ENCODE measurements at regions of chr19 and their contacts with region 1.

Region 1: GRCh38 chr19:16435238-16435917 is 36.4 kb downstream of the EPS15L1 start:
- DNase-seq: peak; percentile 26 to 71
- ATAC-seq: peak; percentile 84 to 93 (median 91)
- H3K4me3 ChIP-seq: no peak overlapping the region
- H3K4me3 Mint-ChIP-seq: peak overlapping the region; percentile 82
- H3K27ac ChIP-seq: peak overlapping the region; percentile 72
- H3K27ac Mint-ChIP-seq: peak overlapping the region; percentile 97 to 99
- H3K4me1 ChIP-seq: peaks cover 57% of the 10 kb centered on the region
- H3K4me1 Mint-ChIP-seq: peaks cover 39 to 42% of the 10 kb centered on the region in 2 donors
- H3K27me3 ChIP-seq: no peaks in the 10 kb centered on the region
- H3K27me3 Mint-ChIP-seq: no peaks in the 10 kb centered on the region
- CTCF ChIP-seq: no peak

Region 2: DNA sequence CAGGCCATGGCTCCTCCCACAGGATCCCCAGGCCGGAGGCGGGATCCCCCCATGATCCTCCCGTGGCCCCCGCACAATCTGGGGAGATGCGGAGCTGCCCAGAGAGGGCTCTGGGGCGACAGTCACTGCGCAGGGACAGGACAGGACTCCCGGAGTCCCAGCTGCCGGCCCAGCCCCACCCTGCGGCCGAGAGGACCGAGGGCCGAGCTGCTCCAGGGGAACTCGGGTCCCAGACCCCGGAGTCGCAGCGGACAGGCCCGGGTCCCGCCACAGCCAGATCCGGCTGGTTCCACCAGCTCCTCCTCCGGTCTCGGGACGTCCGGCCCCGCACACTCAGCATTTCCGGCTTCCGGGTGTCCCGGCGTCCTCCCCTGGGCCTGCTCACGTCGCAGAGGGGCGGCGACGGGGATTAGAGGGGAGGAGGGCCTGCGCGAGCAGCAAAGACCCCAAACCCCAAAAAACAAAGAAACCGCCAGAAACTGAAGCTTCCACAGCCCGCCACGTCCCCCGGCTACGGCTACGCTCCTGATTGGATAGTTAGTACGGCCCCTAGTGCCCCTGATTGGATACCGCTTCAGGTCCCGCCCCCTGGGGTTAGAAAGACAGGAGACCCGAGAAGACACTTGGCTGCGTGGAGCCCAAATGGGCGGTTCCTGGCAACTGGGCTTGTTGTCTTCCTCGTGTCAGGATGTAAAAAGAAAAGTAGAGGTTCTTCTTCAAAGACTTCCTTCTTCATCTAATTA is 598.6 kb before region 1 on chr19:
- intact Hi-C with region 1: loop called (anchors 10 kb)
- DNase-seq: peak; percentile 94 to 96
- ATAC-seq: peak; percentile 87 to 96 (median 90)
- H3K4me3 ChIP-seq: peak overlapping the region; percentile 92
- H3K4me3 Mint-ChIP-seq: peak overlapping the region; percentile 97
- H3K27ac ChIP-seq: peak overlapping the region; percentile 99
- H3K27ac Mint-ChIP-seq: peak overlapping the region; percentile 96 to 97
- H3K4me1 ChIP-seq: peaks cover 15% of the 10 kb centered on the region
- H3K4me1 Mint-ChIP-seq: peaks cover 18 to 19% of the 10 kb centered on the region in 2 donors
- H3K27me3 ChIP-seq: no peaks in the 10 kb centered on the region
- H3K27me3 Mint-ChIP-seq: no peaks in the 10 kb centered on the region
- CTCF ChIP-seq: no peak

Region 3: DNA sequence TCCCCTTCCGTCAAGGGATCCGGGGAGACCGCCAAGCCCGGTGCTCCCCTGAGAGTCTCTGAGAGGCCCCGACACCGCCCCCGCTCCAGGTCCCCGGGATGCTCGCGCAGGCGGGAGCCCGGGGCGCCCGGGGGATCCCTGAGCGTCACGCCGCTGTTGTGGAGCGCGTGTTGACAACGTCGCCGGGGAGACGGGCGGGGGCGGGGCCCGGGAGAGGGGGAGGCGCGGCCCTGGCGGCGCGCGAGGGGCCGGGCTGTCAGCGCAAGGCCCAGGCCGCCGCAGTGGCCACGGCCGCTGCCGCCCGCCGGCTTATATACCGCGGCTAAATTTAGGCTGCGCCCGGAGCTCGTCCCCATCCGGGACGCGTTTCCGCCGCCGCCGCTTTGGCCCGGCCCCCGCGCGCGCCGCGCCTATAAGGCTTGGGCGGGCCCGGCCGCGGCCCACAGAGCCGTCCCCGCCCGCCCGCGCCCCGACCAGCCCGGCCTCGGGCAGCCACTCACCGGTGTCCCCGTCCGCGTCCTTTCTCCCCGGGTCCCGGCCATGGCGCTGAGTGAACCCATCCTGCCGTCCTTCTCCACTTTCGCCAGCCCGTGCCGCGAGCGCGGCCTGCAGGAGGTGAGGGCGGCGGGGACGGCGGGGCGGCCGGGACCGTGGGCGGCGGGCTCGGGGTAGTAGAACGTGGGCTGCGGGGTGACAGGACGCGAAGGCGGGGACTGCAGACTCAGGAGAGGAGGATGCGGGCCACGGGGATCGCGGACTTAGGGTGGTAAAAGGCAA is 110.8 kb before region 1 on chr19 and contains the start of gene KLF2:
- intact Hi-C with region 1: loop called (anchors 5 kb)
- DNase-seq: peak; percentile 97 to 98
- ATAC-seq: peak; percentile 61 to 84 (median 77)
- H3K4me3 ChIP-seq: peak within 1 kb of the TSS; percentile 99
- H3K4me3 Mint-ChIP-seq: peak within 1 kb of the TSS; percentile 81
- H3K27ac ChIP-seq: peak within 1 kb of the TSS; percentile 98
- H3K27ac Mint-ChIP-seq: peak within 1 kb of the TSS; percentile 98 to 99
- H3K4me1 ChIP-seq: peaks cover 35% of the 10 kb centered on the region
- H3K4me1 Mint-ChIP-seq: peaks cover 22 to 35% of the 10 kb centered on the region in 2 donors
- H3K27me3 ChIP-seq: no peaks in the 10 kb centered on the region
- H3K27me3 Mint-ChIP-seq: peaks cover 0 to 4% of the 10 kb centered on the region in 2 donors
- CTCF ChIP-seq: no peak
- total RNA-seq, gene KLF2: 246 to 645 (median 377) TPM

Region 4: GRCh38 chr19:16446724-16447368 is 11.5 kb after region 1 on chr19:
- intact Hi-C with region 1: loop called (anchors 1 kb)
- DNase-seq: peak; percentile 72 to 81
- ATAC-seq: peak; percentile 78 to 85 (median 80)
- H3K4me3 ChIP-seq: no peak overlapping the region
- H3K4me3 Mint-ChIP-seq: peak overlapping the region; percentile 91
- H3K27ac ChIP-seq: peak overlapping the region; percentile 88
- H3K27ac Mint-ChIP-seq: peak overlapping the region; percentile 96 to 97
- H3K4me1 ChIP-seq: peaks cover 91% of the 10 kb centered on the region
- H3K4me1 Mint-ChIP-seq: peaks cover 76 to 81% of the 10 kb centered on the region in 2 donors
- H3K27me3 ChIP-seq: no peaks in the 10 kb centered on the region
- H3K27me3 Mint-ChIP-seq: no peaks in the 10 kb centered on the region
- CTCF ChIP-seq: no peak

Region 5: GRCh38 chr19:16554776-16555175 is 119.4 kb after region 1 on chr19:
- intact Hi-C with region 1: no loop called
- DNase-seq: no peak
- ATAC-seq: no peak
- H3K4me3 ChIP-seq: no peak overlapping the region
- H3K4me3 Mint-ChIP-seq: no peak overlapping the region
- H3K27ac ChIP-seq: no peak overlapping the region
- H3K27ac Mint-ChIP-seq: no peak overlapping the region
- H3K4me1 ChIP-seq: no peaks in the 10 kb centered on the region
- H3K4me1 Mint-ChIP-seq: peaks cover 0 to 4% of the 10 kb centered on the region in 2 donors
- H3K27me3 ChIP-seq: no peaks in the 10 kb centered on the region
- H3K27me3 Mint-ChIP-seq: no peaks in the 10 kb centered on the region
- CTCF ChIP-seq: no peak

Region 6: DNA sequence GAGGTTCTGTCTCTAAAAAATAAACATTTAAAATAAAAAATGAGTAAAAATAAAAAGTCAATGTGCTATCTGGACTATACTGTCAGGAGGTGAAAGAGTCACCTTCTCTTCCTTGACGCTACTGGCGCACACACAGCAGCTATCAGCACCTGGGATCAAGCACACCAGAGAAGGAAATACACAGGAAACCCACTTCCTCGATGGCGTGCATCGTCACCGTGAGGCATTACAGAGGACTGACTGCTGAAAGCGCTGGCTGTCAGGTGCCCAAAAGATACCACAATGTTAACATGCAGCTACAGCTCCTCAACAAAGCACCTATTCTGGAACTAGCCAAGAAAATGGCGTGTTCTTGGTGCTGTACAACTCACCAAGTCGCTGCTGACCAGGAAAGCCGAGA is 130.8 kb after region 1 on chr19:
- intact Hi-C with region 1: loop called (anchors 5 kb)
- DNase-seq: peak; percentile 57 to 96
- ATAC-seq: peak; percentile 96 to 98 (median 97)
- H3K4me3 ChIP-seq: no peak overlapping the region
- H3K4me3 Mint-ChIP-seq: peak overlapping the region; percentile 95
- H3K27ac ChIP-seq: peak overlapping the region; percentile 52
- H3K27ac Mint-ChIP-seq: peak overlapping the region; percentile 97 to 98
- H3K4me1 ChIP-seq: peaks cover 27% of the 10 kb centered on the region
- H3K4me1 Mint-ChIP-seq: peaks cover 9 to 10% of the 10 kb centered on the region in 2 donors
- H3K27me3 ChIP-seq: no peaks in the 10 kb centered on the region
- H3K27me3 Mint-ChIP-seq: no peaks in the 10 kb centered on the region
- CTCF ChIP-seq: no peak

Measured in natural killer cell (primary cell).